Mammary epithelial cell (primary cell): ENCODE measurements at regions of chr20 and their contacts with region 1.

Region 1: DNA sequence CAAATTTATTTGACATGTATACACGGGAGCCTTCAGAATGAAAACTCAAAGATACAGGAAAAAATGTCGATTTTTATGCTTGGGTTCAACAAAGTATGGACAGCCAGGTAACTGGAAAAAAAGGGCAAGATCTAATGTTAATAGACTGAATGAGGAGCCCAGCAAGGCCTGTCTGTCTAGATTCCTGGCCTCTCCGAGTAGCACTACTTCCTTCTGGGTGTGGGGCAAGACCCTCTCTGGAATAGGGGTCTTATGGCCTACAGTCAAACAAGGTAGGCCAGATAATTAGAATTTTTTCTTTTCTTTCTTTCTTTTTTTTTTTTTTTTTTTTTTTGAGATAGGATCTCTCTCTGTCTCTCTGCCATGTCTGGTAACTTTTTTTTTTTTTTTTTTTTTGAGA is 113.4 kb upstream of the SHLD1 start:
- DNase-seq: no peak
- H3K4me3 ChIP-seq: no peak overlapping the region
- H3K27ac ChIP-seq: no peak overlapping the region
- H3K4me1 ChIP-seq: no peaks in the 10 kb centered on the region
- H3K27me3 ChIP-seq: no peaks in the 10 kb centered on the region
- CTCF ChIP-seq: no peak

Region 2: DNA sequence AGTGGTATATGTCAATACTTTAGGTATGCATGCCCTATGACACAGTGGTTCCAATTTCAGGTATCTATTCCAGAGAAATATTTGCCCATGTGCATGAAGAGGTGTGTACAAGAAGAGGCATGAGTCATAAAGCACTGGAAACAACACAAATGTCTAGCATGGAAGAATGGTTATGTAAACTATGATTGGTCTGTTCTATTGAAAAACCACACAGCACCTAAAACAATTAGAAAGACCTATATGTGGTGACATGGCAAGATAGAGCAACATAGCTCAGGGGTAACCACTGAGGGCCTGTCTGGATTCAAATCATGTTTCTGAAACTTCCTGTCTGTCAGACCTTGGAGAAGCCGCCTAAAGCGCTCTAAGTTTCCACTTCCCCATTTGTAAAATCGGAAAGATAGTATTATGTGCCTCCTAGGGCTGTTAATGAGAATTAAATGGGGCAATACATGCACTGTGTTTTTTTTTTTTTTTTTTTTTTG is 37.4 kb after region 1 on chr20:
- CTCF ChIA-PET with region 1: no interaction called
- dilution Hi-C with region 1: loop called (anchors 5 kb)
- in situ Hi-C with region 1: no loop called
- intact Hi-C with region 1: no loop called
- DNase-seq: peak; percentile 90
- H3K4me3 ChIP-seq: no peak overlapping the region
- H3K27ac ChIP-seq: no peak overlapping the region
- H3K4me1 ChIP-seq: peaks cover 14% of the 10 kb centered on the region
- H3K27me3 ChIP-seq: no peaks in the 10 kb centered on the region
- CTCF ChIP-seq: no peak

Region 3: DNA sequence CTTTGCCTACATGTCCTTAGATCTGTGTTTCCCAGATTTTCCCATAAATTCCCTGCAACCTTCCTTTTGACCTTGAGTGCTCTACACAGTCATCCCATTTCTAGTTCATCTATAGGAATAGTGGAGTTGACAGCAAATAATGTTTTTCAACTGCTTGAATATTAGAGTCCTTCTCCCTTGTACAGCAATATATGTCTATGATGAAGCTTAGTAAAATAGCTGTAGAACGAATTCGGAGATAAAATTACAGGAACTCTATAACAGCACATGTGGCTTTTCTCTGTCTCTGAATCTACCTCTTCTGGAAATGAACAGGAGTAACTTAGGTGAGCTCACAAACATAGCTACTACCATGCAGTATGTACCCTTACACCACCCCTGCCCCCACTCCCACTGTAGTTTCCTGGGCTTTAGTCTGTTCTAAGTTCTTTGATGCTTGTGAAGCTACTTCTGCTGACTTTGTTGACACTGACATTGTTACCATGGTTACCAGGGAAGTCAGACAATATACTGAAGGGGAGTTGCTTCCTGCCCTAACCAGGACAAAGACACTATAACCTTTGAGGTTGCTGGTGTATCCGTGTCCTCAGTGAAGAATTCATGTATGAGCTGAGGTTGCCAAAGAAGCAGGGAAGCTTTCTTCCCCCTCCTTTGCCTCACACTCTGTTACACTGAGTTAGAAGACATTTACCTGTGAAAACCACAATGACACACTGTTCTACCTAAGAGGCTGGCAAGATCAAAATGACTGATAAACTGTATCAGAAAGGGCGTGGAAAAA is 77.6 kb after region 1 on chr20:
- CTCF ChIA-PET with region 1: no interaction called
- dilution Hi-C with region 1: loop called (anchors 5 kb)
- in situ Hi-C with region 1: no loop called
- intact Hi-C with region 1: no loop called
- DNase-seq: peak; percentile 88
- H3K4me3 ChIP-seq: no peak overlapping the region
- H3K27ac ChIP-seq: no peak overlapping the region
- H3K4me1 ChIP-seq: peaks cover 13% of the 10 kb centered on the region
- H3K27me3 ChIP-seq: no peaks in the 10 kb centered on the region
- CTCF ChIP-seq: no peak